Posterior cingulate gyrus (tissue), 11 donors: ENCODE measurements at regions of chr7 and their contacts with region 1.

Region 1: DNA sequence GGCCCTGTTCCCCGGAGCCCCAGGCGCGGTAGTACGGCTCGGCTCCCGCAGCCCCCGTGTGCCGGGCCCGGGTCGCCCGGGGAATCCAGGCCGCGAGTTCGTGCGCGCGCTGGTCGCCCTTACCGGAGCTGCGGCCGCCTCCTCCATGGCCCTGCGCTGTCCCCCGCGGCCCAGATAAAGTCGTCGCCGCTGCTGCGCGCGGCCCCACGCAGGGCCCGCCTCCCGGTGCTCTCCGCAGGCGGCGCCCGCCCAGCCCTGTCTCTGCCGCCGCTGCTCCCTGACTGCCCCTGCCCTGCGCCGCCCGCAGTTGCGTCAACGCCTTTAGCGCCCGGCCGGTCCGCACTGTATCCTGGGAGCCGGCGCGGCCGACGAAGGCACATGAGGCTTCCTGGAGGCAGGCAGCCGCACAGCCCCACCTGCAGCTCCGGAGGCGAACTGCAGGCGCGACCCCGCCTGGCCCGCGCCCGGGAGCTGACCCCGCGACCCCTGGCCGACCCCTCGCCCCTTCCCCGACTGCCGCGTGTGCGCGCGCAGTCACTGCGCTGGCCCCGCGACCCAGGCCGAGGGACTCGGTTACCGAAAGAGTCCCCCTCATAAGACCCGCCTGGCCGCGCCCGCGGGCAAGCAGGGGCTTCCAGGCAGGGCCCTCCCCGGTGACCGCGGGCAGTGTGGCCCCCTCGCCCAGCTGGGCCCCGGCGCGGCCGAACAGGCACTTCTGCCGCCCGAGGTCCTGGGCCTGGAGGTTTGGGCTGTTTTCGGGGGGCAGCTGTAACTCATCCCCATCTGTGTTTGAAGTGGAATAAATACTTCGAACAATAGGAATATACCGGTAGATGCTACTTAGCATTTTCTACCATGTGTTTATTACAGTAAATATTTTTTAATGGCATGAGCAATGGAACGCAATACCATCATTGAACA is 127.1 kb upstream of the ZNF746 start:
- DNase-seq: peak; percentile 82 to 99 (median 92)

Region 2: DNA sequence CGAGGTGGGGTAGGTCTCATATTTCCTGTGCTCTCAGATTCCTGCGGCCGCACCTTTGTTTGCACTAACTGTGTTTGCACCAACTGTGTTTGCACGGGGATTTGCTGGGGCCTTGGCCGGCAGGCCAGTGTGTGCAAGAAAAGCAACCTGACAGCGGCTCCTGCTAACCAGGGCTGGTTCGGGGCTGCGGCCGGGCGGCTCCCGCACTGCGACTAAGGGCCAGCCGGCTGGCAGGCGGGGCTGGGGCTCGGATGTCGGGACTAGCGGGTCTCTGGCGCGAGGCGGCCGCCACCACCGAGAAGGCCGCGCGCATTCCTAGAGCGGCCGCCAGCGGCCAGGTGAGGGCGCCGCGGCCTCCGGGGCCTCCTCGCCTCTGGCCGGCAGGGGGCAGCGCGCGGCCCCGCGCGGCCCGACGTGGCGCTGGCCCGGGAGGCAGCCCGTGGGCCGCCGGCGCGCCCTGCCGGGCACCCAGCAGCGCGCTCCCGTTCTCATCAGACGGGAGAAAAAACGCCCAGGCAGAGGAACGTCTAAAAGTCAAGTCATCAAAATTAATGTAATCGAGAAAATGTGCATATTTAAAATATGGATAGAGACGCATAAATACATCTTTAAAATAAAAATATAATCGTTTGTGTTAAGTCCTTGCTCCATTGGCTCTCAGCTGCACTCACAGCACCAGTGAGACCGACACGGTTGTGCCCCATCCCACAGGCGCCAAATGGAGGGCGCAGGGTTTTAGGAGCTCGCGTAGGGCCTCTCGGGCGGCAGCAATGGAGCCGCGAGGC is 202.4 kb before region 1 on chr7:
- intact Hi-C with region 1: loop called (anchors 10 kb)
- DNase-seq: peak in 3 of 10 donors; percentile 61 to 91 (median 79)

Region 3: GRCh38 chr7:149686002-149686401 is 61.3 kb after region 1 on chr7:
- intact Hi-C with region 1: no loop called
- DNase-seq: no peak

Region 4: DNA sequence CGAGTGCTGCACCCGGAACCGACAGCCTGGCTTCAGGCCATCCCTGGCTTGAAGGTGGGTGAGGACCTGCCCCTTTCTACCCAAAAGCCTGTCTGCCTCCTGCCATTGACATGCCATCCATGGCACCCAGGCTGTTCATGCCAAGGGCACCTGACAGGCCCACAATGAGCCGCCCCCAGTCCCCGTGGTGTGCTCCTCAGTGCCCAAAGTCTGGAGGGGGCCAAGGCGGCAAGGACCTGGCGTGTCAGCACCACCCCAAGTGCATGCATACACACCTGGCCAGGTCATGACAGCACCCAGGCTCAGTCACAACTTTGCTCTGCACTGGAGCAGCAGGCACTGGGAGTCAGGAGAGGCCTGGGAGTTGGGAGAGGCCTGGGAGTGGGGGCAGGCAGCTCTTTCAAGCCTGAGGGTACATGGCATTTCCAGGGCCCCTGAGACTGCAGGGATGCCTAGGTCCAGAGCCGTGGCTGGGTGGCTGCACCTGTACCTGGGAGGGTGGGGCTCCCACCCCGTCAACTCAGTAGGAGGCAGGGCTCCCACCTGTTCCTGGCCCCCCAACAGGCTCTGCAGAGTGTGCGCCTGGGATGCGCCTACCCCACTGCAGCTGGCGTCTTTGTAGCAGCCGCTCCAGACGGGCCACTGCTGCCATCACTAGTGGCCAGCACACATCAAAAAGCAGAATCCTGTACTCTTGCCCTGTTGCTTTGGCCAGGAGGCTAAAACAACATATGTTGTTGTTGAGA is 77.0 kb after region 1 on chr7:
- intact Hi-C with region 1: no loop called
- DNase-seq: no peak

Region 5: DNA sequence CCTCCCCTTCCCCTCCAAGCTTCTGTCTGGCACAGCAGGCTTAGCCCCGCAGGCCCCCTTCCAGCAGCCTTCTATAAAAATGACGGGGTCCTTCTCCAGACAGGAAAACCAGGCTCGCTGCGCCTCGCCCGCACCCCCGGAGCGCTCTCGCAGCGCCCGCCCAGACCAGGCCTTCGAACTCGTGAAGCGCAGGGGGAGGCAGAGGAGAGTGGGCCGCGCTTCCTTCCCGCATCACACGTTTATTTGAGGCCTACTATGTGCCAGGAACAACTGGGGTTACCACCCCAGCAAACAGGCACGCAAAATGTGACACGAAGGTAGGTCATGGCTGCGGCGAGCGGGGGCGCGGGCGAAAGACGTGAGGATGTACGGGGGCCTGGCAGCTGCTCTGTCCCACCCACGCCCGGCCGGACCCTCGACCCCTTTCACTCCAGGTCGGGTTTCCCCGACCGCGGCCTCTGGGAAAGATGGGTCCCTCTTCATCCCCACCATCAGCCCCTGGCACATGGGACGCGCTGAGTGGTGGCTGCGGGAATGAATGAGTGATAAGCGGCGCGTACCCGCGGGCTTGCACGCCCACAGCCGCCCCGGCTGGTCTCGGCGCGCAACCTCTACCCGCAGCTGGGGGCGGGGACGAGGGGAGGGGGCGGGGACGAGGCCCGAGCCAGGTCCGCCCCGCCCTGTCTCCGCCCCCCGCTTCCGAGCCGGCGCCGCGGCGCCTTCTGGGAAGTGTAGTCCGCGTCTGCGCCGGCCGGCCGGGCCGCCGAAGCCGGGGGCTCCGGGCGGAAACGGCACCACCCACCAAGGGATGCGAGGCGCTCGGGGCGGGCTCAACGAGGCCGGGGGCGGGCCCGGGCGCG is 89.6 kb after region 1 on chr7:
- intact Hi-C with region 1: loop called (anchors 5 kb)
- DNase-seq: peak; percentile 81 to 97 (median 86)